ENCODE measurements at regions of chr1 and their contacts with region 1.

Region 1: DNA sequence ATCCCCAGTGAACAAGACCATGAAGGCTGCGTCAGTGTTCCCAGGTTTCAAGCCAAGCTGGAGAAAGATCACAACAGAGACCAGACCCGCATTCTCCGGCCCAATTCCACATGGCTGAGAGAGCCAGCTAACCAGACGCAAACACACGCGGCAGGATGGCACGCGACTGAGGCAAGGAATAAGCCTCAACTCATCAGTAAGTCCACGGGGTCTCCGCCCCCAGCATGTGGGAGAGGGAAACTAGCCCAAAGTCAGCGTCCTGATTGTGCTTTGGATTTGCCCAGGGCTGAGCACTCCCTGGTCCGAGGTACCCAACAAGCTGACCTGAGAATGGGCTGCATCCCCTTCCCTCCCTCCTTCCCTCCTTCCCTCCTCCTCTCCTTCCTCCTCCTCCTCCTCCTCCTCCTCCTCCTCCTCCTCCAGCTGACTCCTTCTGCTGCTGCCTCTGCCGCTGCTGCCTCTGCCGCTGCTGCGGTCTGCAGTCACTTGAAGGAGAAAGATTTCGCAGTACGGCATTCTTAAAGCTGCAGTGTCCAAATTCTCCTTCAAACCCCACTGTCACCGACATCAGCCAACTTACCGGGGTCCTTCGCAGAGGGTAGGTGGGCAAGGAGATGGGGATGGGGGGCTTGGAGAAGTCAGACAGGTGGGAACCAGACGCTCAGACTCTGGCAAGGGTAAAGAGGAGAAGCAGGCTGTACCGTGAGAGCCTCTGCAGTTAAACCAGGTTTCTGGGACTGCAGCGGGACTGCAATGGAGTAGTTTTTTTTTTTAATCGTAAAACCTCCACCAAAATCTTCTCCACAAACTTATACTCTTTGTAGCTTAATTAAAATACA is 33.0 kb upstream of the H6PD start:
- DNase-seq: peak in 1 of 2 experiments; percentile 15
- H3K4me3 ChIP-seq: peak overlapping the region; percentile 20
- H3K4me3 Mint-ChIP-seq: peak overlapping the region; percentile 75
- H3K27ac Mint-ChIP-seq: no peak overlapping the region
- H3K4me1 ChIP-seq: peaks cover 21% of the 10 kb centered on the region
- H3K4me1 Mint-ChIP-seq: peaks cover 5% of the 10 kb centered on the region
- H3K27me3 ChIP-seq: no peaks in the 10 kb centered on the region
- H3K27me3 Mint-ChIP-seq: no peaks in the 10 kb centered on the region
- CTCF ChIP-seq: no peak

Region 2: DNA sequence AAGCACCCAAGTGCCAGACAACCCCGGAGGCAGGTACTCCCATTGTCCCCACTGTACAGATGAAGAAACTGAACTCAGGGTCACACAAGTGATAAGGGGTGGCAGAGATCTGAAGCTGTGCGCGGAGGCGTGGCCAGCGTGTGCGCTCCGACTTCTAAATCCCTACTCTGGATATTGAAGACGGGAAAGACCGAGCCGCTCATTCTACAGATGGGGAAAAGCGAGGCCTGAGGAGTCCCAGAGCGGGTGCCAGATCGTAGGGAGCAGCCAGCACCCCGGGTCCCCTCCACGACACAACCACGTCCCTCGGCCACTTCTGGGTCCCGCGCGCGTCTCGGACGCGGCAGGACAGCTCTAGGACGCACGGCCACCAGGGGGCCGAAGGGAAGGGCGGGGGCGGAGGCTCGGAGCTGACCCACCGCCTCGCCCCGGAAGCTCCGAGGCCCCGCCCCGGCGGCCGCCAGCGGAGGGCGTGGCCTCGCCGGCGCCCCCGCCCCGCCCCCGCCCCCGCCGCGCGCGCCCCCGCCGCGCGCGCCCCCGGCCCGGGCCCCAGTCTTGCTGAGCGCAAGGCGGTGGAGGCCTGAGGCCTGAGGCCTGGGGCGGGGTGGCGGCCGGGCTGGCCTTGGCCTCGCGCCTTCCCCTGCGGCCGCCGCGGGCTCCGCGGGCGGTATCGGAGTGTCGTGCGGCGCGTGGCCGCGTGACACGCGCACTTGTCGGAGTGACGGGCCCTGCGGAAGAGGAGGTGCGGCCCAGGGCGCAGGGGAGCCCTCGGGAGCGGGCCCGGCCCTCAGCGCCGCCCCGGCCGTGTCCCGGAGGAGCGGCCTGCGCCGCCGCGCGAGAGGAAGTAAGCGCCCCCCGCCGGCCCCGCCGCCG is 32.8 kb after region 1 on chr1 and contains the start of gene H6PD:
- CTCF ChIA-PET with region 1: interaction called, 6 read pairs
- POLR2A ChIA-PET with region 1: interaction called, 10 read pairs
- intact Hi-C with region 1: no loop called
- DNase-seq: peak; percentile 87 to 92
- H3K4me3 ChIP-seq: peak within 1 kb of the TSS; percentile 52
- H3K4me3 Mint-ChIP-seq: peak within 1 kb of the TSS; percentile 95
- H3K27ac Mint-ChIP-seq: peak within 1 kb of the TSS; percentile 86
- H3K4me1 ChIP-seq: 0 out of 2 replicates have a peak, but pooled peaks cover 5% of the 10 kb centered on the region
- H3K4me1 Mint-ChIP-seq: peaks cover 11% of the 10 kb centered on the region
- H3K27me3 ChIP-seq: no peaks in the 10 kb centered on the region
- H3K27me3 Mint-ChIP-seq: no peaks in the 10 kb centered on the region
- CTCF ChIP-seq: peak; percentile 74 to 78
- total RNA-seq, gene H6PD: 10.1 and 13.0 TPM in 2 replicates

Region 3: DNA sequence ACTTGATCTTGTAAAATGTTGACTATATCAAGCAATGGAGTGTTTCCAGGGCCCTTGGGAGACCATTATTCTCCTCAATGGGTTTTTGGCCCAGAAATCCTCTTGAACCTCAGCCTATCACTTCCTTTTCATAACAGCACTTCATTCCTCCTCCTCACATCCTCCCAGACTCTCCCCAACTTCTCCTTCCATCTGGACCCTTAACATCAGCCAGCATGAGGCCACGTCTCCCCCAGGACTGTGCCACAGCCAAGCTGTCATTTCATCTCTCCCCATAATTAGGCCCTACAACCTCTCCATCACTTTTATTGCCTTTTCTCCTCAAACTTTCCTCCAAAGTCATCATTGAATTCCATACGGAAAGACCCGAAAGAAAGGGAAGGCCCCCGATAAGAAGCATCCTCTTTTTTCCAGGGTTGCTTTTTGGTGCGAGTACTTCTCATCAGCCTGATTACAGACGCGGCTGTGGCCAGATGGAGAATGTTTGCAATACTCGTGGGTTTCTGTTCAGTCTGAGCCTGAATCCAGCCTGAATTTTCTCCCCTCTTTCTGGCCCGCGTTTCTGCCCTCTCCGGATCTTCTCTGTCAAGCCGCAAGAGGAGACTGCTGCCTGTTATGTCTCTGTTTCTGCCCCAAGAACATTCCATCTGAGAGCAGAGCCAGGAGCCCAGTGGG is 285.0 kb after region 1 on chr1:
- CTCF ChIA-PET with region 1: no interaction called
- POLR2A ChIA-PET with region 1: interaction called, 13 read pairs
- intact Hi-C with region 1: no loop called
- DNase-seq: no peak
- H3K4me3 ChIP-seq: no peak overlapping the region
- H3K4me3 Mint-ChIP-seq: no peak overlapping the region
- H3K27ac Mint-ChIP-seq: no peak overlapping the region
- H3K4me1 ChIP-seq: no peaks in the 10 kb centered on the region
- H3K4me1 Mint-ChIP-seq: peaks cover 2% of the 10 kb centered on the region
- H3K27me3 ChIP-seq: no peaks in the 10 kb centered on the region
- H3K27me3 Mint-ChIP-seq: no peaks in the 10 kb centered on the region
- CTCF ChIP-seq: no peak

Region 4: GRCh38 chr1:9503001-9503675 is 301.5 kb after region 1 on chr1:
- CTCF ChIA-PET with region 1: no interaction called
- POLR2A ChIA-PET with region 1: no interaction called
- intact Hi-C with region 1: no loop called
- DNase-seq: no peak
- H3K4me3 ChIP-seq: no peak overlapping the region
- H3K4me3 Mint-ChIP-seq: no peak overlapping the region
- H3K27ac Mint-ChIP-seq: no peak overlapping the region
- H3K4me1 ChIP-seq: no peaks in the 10 kb centered on the region; the same call in 1 of the 2 replicates
- H3K4me1 Mint-ChIP-seq: no peaks in the 10 kb centered on the region
- H3K27me3 ChIP-seq: no peaks in the 10 kb centered on the region
- H3K27me3 Mint-ChIP-seq: no peaks in the 10 kb centered on the region
- CTCF ChIP-seq: no peak